Heart right ventricle (tissue), 16 donors: ENCODE measurements at regions of chr9 and their contacts with region 1.

Region 1: GRCh38 chr9:113578882-113579282 is 115.4 kb downstream of the RGS3 start:
- DNase-seq: no peak
- ATAC-seq: peak in 3 of 8 donors; percentile 3 to 20 (median 14)
- H3K4me3 ChIP-seq: peak overlapping the region in 1 of 10 donors; percentile 44
- H3K27ac ChIP-seq: peak overlapping the region; percentile 16 to 93 (median 88)
- H3K4me1 ChIP-seq: peaks cover 58 to 100% (median 85%) of the 10 kb centered on the region in 9 donors
- H3K27me3 ChIP-seq: no peaks in the 10 kb centered on the region
- CTCF ChIP-seq: no peak

Region 2: DNA sequence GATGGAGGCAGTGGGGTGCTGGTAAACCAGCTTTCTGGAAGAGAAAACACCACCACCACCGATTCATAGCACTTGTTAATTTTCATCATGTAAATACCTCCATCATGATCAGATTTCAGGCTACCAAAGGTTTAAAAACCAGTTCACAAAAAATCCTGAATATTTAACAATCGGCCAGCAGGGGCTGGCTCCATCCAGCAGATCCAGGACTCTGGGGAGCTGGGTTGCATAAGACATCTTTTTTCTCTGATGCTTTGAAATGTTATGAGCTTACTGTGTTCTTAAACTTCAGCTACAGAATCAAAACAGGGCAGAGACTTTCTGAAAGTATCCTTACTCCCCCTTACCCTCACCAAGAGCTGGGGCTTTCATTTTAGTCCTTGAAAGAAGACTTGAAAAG is 261.1 kb before region 1 on chr9:
- intact Hi-C with region 1: loop called in 1 of 10 experiments (anchors 10 kb)
- DNase-seq: no peak
- ATAC-seq: peak in 1 of 8 donors; percentile 42
- H3K4me3 ChIP-seq: no peak overlapping the region
- H3K27ac ChIP-seq: no peak overlapping the region
- H3K4me1 ChIP-seq: no peaks in the 10 kb centered on the region
- H3K27me3 ChIP-seq: no peaks in the 10 kb centered on the region
- CTCF ChIP-seq: peak in 3 of 9 donors; percentile 8 to 20 (median 12)

Region 3: GRCh38 chr9:113446323-113446740 is 132.6 kb before region 1 on chr9:
- intact Hi-C with region 1: no loop called
- DNase-seq: no peak
- ATAC-seq: peak; percentile 35 to 83 (median 71)
- H3K4me3 ChIP-seq: no peak overlapping the region
- H3K27ac ChIP-seq: peak overlapping the region in 6 of 10 donors; percentile 15 to 74 (median 40)
- H3K4me1 ChIP-seq: peaks cover 0 to 20% (median 7%) of the 10 kb centered on the region in 9 donors
- H3K27me3 ChIP-seq: no peaks in the 10 kb centered on the region
- CTCF ChIP-seq: peak; percentile 37 to 81 (median 71)

Region 4: DNA sequence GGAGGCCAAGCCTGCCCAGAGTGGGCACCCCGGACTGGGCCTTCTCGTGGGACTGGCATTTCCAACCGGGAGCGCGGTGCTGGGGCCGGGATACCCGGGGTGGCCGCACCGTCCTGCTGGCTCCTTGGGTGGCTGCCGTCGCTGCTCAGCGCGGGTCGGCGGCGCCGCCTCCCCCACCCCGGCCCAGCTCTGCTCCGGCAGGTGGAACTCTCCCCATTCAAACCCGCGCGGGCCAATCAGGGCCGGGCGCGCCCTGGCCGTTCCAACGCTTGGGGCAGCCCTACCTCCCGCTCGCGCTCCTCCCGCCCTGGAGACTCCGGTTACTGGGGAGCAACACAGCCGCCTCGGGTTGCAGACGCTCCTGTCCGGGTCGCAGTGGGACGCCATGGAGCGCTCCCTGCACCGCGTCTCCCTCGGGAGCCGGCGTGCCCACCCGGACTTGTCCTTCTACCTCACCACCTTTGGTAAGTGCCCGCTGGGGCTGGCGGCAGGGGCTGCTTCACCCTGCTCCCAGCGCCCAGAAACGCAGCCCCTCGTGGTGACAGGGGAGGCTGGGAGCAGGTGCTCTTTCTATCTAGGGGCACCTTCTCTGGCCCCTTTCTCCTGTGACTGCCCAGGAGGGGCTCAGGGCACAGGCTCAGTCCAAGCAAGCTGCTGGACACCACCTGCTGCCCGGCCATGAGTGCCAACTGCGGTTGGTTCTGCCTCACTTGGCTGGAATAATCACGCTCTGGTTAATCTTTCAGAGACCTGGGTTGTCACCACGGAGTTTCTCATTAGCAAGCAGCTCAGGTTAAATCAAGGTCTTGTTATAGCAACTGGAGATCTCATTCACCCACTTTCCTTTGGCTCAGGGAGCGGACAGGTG is 115.2 kb before region 1 on chr9 and contains the start of gene RGS3:
- intact Hi-C with region 1: loop called in 2 of 10 experiments (anchors 5 kb)
- DNase-seq: peak; percentile 63 to 69
- ATAC-seq: peak; percentile 90 to 97 (median 95)
- H3K4me3 ChIP-seq: peak within 1 kb of the TSS in 9 of 10 donors; percentile 27 to 59 (median 48)
- H3K27ac ChIP-seq: peak within 1 kb of the TSS; percentile 55 to 91 (median 72)
- H3K4me1 ChIP-seq: peaks cover 0 to 25% (median 9%) of the 10 kb centered on the region in 9 donors
- H3K27me3 ChIP-seq: peaks cover 0 to 11% (median 0%) of the 10 kb centered on the region in 7 donors
- CTCF ChIP-seq: peak in 3 of 9 donors; percentile 30 to 44 (median 31)
- total RNA-seq, gene RGS3: 98.7 to 201 (median 140) TPM

Region 5: DNA sequence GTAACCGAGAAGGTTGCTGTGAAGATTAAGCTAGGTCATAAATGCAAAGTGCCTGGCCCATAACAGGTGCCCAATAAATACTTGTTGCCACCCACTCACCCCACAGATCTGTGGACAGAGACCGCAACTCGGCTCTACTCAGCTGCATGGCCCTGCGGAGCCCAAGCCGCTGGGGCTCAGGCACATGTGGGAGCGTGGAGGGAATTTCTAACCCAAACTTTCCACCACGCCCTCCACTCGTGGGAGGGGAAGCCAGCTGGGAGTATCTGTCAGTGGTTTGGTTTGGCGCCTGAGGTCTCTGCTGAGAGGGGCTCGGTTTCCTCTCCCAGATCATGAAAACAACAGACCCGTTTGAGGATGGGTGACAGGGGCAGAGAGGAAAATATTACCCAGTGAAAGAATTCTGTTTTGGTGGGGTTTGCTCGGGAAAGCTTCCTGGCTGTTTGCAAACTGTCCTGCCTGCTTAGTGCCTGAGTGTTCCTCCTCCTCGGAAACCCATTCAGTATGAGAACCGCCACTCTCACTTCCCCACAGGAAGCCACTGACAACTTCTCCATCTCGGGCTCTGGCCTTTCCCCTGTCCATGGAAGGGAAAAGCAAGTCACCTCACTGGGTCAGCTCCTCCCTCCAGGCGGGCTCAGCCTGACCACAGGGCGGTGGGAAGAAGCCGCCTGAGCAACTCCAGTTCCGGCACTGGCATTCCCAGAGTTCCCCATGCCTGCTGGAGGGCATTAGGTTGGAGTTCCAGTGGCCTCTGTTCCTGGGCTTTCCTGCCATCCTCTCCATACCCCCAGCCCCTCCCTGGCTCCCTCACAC is 55.3 kb before region 1 on chr9:
- intact Hi-C with region 1: loop called in 4 of 10 experiments (anchors 5 to 10 kb)
- DNase-seq: peak; percentile 63 to 75
- ATAC-seq: peak; percentile 50 to 76 (median 60)
- H3K4me3 ChIP-seq: peak overlapping the region in 5 of 10 donors; percentile 1 to 12 (median 9)
- H3K27ac ChIP-seq: peak overlapping the region; percentile 65 to 87 (median 79)
- H3K4me1 ChIP-seq: peaks cover 47 to 100% (median 88%) of the 10 kb centered on the region in 9 donors
- H3K27me3 ChIP-seq: no peaks in the 10 kb centered on the region
- CTCF ChIP-seq: no peak

Region 6: GRCh38 chr9:113695901-113696300 is 117.0 kb after region 1 on chr9:
- intact Hi-C with region 1: no loop called
- DNase-seq: no peak
- ATAC-seq: no peak
- H3K4me3 ChIP-seq: no peak overlapping the region
- H3K27ac ChIP-seq: no peak overlapping the region
- H3K4me1 ChIP-seq: no peaks in the 10 kb centered on the region
- H3K27me3 ChIP-seq: peaks cover 0 to 23% (median 11%) of the 10 kb centered on the region in 7 donors
- CTCF ChIP-seq: no peak